PC-9 (cell line): ENCODE measurements at regions of chr1 and their contacts with region 1.

Region 1: GRCh38 chr1:179175011-179175841 is 54.3 kb downstream of the ABL2 start:
- DNase-seq: peak in 1 of 2 experiments; percentile 64
- H3K4me3 ChIP-seq: no peak overlapping the region
- H3K27ac ChIP-seq: peak overlapping the region; percentile 65
- H3K4me1 ChIP-seq: peaks cover 18% of the 10 kb centered on the region; the same call in 1 of the 2 replicates
- H3K27me3 ChIP-seq: no peaks in the 10 kb centered on the region
- CTCF ChIP-seq: no peak

Region 2: GRCh38 chr1:179164494-179164893 is 10.7 kb before region 1 on chr1:
- CTCF ChIA-PET with region 1: interaction called, 4 read pairs
- POLR2A ChIA-PET with region 1: interaction called, 10 read pairs
- intact Hi-C with region 1: no loop called
- DNase-seq: peak in 1 of 2 experiments; percentile 83
- H3K4me3 ChIP-seq: no peak overlapping the region
- H3K27ac ChIP-seq: peak overlapping the region; percentile 71
- H3K4me1 ChIP-seq: peaks cover 20% of the 10 kb centered on the region
- H3K27me3 ChIP-seq: no peaks in the 10 kb centered on the region
- CTCF ChIP-seq: no peak